Naive thymus-derived CD8-positive, alpha-beta T cell (primary cell): ENCODE measurements at regions of chr2 and their contacts with region 1.

Region 1: DNA sequence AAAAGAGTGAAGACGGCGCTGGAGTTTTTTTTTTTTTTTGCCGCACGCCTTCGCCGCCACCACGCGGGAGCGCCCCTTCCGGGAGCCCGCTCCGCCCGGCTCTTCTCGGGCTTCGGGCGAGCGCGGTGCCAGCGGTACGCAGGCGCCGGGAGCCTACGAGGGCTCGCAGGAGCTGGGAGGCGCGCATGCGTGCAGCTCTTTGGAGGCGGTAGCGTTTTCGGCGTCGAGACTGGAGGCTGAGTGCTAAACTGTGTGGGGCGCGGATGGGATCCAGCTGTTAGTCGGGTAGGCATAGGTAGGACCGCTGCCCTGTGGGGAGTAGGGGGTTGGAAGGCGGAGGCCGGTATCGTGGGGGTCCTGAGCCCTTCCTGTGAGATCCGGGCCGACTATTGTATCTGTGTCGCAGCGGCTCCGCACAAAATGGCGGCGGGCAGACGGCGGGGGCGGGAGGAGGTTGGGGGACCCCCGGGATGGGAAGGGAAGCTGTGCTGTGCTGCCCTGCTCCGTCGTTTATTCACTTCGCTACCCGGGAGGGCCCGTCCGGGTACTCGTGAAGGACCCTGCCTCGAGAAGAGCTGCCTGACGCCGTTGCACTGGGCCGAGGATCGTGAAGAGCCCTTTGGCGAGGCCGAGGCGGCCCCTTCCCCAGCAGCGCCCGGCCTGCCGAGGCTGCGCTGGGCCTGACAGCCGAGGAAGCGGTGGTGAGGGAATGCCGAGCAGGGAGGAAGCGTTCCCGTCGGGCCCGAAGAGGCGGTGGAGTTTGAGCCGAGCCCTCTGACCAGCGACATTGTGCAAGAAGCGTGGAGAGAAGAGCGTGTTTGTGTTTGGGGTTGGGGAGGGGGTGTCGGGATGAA is at the start of gene ZNF638:
- DNase-seq: peak; percentile 87 to 98 (median 92)
- ATAC-seq: peak; percentile 94 to 95
- H3K4me3 Mint-ChIP-seq: peak within 1 kb of the TSS; percentile 96 to 100 (median 100)
- H3K27ac Mint-ChIP-seq: peak within 1 kb of the TSS; percentile 99 to 100 (median 100)
- H3K4me1 Mint-ChIP-seq: peaks cover 13 to 55% (median 38%) of the 10 kb centered on the region in 4 donors
- H3K27me3 Mint-ChIP-seq: peaks cover 0 to 2% (median 0%) of the 10 kb centered on the region in 5 donors
- polyA plus RNA-seq, gene ZNF638: 40.7 to 52.4 (median 51.9) TPM

Region 2: GRCh38 chr2:71130113-71130904 is 201.5 kb before region 1 on chr2 and contains the starts of genes MCEE and MPHOSPH10:
- POLR2A ChIA-PET with region 1: interaction called, 21 read pairs
- DNase-seq: peak; percentile 80 to 95 (median 86)
- ATAC-seq: peak; percentile 88 to 90
- H3K4me3 Mint-ChIP-seq: no peak within 1 kb of the TSS
- H3K27ac Mint-ChIP-seq: peak within 1 kb of the TSS in 1 of 10 donors; percentile 73
- H3K4me1 Mint-ChIP-seq: peaks cover 7 to 27% (median 19%) of the 10 kb centered on the region in 4 donors
- H3K27me3 Mint-ChIP-seq: no peaks in the 10 kb centered on the region
- polyA plus RNA-seq, gene MCEE: 20.9 to 25.1 (median 22.2) TPM
- polyA plus RNA-seq, gene MPHOSPH10: 21.5 to 33.6 (median 24.1) TPM

Region 3: GRCh38 chr2:71276311-71277146 is 55.3 kb before region 1 on chr2:
- POLR2A ChIA-PET with region 1: interaction called, 11 read pairs
- DNase-seq: peak; percentile 71 to 86 (median 83)
- ATAC-seq: peak; percentile 98 to 99
- H3K4me3 Mint-ChIP-seq: peak overlapping the region; percentile 72 to 88 (median 76)
- H3K27ac Mint-ChIP-seq: no peak overlapping the region
- H3K4me1 Mint-ChIP-seq: peaks cover 5 to 19% (median 16%) of the 10 kb centered on the region in 4 donors
- H3K27me3 Mint-ChIP-seq: peaks cover 54 to 90% (median 68%) of the 10 kb centered on the region in 5 donors

Region 4: DNA sequence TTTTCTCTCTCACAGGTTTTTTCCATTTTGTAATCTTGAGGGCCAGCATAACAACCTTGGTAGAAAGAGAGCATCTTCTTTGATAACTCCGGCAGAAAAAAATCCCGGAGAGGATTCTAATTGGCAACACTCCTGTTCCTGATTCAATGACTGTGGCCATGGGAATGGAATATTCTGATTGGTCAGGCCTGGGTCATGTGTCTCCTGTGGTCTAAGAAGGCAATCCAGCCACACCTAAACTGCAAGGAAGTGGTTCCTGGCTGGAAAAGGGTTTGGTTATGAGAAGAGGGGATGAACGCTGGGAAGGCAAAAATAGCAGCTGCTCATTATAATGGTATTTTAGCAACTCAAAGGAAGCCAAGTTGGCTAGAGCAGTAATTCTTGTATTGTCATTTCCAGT is 25.0 kb before region 1 on chr2:
- POLR2A ChIA-PET with region 1: no interaction called
- DNase-seq: no peak
- ATAC-seq: no peak
- H3K4me3 Mint-ChIP-seq: no peak overlapping the region
- H3K27ac Mint-ChIP-seq: no peak overlapping the region
- H3K4me1 Mint-ChIP-seq: no peaks in the 10 kb centered on the region
- H3K27me3 Mint-ChIP-seq: peaks cover 0 to 3% (median 0%) of the 10 kb centered on the region in 5 donors

Region 5: DNA sequence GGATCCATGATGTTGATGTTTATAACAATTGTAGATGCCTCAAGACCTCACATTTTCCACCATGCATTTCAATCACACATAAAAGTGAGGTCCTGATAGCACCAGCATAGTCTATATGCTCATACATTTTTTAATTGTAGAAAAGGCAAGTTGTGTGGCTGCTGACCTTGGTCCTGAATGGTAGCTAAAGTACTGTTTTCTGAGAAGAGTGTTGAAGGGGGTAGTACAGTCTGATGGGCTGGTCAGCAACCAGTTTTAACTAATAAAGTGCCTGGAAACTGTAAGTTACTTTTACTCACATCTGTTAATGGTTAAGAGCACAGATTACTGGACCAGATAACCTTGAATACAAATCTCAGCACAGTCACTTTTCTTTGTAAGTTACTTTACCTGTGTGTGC is 15.7 kb after region 1 on chr2:
- POLR2A ChIA-PET with region 1: interaction called, 24 read pairs
- DNase-seq: peak in 1 of 10 donors; percentile 20
- ATAC-seq: no peak
- H3K4me3 Mint-ChIP-seq: peak overlapping the region in 1 of 10 donors; percentile 7
- H3K27ac Mint-ChIP-seq: no peak overlapping the region
- H3K4me1 Mint-ChIP-seq: peaks cover 34 to 82% (median 65%) of the 10 kb centered on the region in 4 donors
- H3K27me3 Mint-ChIP-seq: no peaks in the 10 kb centered on the region